PC-3 (cell line): ENCODE measurements at regions of chr7 and their contacts with region 1.

Region 1: DNA sequence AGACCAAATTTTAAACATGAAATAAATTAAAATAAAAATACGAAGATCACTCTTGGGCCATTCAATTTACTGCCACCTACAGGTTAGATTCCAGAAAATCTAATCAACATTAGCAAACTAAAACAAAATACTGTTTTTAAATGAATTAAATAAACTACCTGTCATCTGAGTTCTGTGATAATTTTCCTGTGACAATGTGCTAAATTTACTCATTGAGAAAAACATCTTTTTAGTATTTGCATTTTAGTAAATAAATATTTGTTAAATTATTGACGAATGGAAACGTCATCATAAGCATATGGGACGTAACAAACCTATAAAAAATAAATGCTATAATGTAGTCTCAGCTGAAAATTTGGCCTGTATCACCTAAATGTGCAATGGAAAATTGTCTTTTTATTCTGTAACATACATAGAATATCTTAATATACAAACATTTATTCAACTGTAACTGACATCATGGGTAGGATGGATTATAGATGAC is 72.1 kb downstream of the ITGB8 start:
- DNase-seq: peak; percentile 36
- ATAC-seq: peak; percentile 57
- H3K4me3 ChIP-seq: no peak overlapping the region
- H3K27ac ChIP-seq: no peak overlapping the region
- H3K4me1 ChIP-seq: peaks cover 18% of the 10 kb centered on the region
- H3K27me3 ChIP-seq: no peaks in the 10 kb centered on the region
- CTCF ChIP-seq: peak; percentile 68

Region 2: DNA sequence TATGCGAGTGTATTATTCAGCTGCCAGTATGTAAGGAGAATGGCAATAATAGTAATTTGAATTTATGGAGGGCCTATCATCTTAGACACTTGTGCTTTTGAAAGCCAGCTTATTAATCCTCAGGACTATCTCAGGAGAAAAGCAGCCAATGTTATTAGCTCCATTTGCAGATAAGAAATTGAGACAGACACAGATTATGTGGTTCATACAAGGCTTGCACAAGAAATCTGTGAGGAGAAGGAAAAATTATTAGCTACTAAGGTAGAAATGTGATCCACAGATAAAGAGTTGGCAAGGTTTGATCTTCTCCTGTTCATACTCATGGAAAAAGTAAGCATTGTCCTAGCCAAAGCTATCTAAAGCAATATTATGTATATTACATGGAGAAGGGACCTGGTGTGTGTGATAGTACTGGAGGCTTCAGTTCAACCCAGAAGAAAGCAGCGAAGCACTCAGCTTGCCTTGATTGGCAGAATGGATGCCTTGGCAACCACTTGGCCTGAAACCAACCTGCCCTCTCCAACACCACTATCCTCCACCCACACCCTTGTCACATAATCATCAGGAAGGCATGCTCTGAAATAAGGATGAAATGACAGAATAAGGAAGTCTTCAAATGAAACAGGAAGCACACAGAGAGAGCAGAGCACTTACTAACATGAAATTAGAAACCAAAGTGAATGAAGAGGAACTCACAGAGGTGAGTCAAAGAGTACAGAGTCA is 203.6 kb before region 1 on chr7:
- CTCF ChIA-PET with region 1: no interaction called
- POLR2A ChIA-PET with region 1: no interaction called
- intact Hi-C with region 1: loop called (anchors 5 kb)
- DNase-seq: peak; percentile 94
- ATAC-seq: peak; percentile 98
- H3K4me3 ChIP-seq: no peak overlapping the region
- H3K27ac ChIP-seq: peak overlapping the region; percentile 49
- H3K4me1 ChIP-seq: peaks cover 37% of the 10 kb centered on the region
- H3K27me3 ChIP-seq: no peaks in the 10 kb centered on the region
- CTCF ChIP-seq: no peak